ENCODE measurements at regions of chrX and their contacts with region 1.

Region 1: DNA sequence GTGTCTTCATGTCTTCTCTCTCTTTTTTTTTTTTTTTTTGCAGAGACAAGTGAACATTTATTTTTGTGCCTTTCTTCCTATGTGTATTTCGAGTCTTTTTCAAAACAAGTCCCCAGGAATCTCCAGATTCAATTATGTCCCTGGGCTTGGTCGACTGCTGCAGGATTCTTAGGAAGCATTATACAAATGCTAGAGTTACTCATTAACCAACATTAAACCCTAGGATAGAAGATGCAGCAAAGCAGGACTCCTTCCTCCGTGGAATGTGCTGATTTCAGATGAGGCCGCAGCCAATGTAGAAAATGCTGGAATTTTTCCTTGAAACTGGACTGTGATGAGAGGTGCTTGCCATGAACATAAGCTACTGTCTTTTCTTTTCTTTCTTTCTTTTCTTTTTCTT is 3.4 kb downstream of the ZNF81 start:
- DNase-seq: no peak
- ATAC-seq: no peak
- H3K4me3 ChIP-seq: no peak overlapping the region
- H3K4me3 Mint-ChIP-seq: no peak overlapping the region
- H3K27ac ChIP-seq: no peak overlapping the region
- H3K27ac Mint-ChIP-seq: no peak overlapping the region
- H3K4me1 ChIP-seq: peaks cover 7 to 11% of the 10 kb centered on the region in 2 experiments
- H3K4me1 Mint-ChIP-seq: peaks cover 19 to 31% (median 20%) of the 10 kb centered on the region in 3 donors
- H3K27me3 ChIP-seq: no peaks in the 10 kb centered on the region
- H3K27me3 Mint-ChIP-seq: no peaks in the 10 kb centered on the region

Region 2: GRCh38 chrX:47446431-47446830 is 393.7 kb before region 1 on chrX:
- CTCF ChIA-PET with region 1: no interaction called
- POLR2A ChIA-PET with region 1: interaction called in 1 of 2 experiments, 10 read pairs
- DNase-seq: no peak
- ATAC-seq: no peak
- H3K4me3 ChIP-seq: no peak overlapping the region
- H3K4me3 Mint-ChIP-seq: no peak overlapping the region
- H3K27ac ChIP-seq: no peak overlapping the region
- H3K27ac Mint-ChIP-seq: no peak overlapping the region
- H3K4me1 ChIP-seq: no peaks in the 10 kb centered on the region
- H3K4me1 Mint-ChIP-seq: no peaks in the 10 kb centered on the region
- H3K27me3 ChIP-seq: no peaks in the 10 kb centered on the region
- H3K27me3 Mint-ChIP-seq: peaks cover 0 to 3% of the 10 kb centered on the region in 2 donors

Region 3: DNA sequence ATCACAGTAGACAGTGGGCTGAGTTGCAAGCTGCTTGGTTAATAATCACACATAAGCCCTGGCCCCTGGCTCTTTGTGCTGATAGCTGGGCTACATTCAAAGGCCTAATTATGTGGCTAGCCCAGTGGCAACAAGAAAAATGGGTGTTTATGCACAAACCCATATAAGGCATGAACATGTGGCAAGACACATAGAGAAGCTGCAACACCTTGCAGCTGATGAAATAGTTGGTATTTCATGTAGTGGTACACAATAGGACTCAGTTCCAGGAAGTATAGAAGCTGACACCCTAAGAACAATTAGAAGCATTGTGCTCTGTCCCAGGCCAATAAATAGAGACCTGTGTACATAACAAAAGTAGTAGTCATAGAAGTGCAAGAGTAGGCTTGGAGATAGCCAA is 246.0 kb after region 1 on chrX:
- CTCF ChIA-PET with region 1: no interaction called
- POLR2A ChIA-PET with region 1: no interaction called
- DNase-seq: no peak
- ATAC-seq: no peak
- H3K4me3 ChIP-seq: no peak overlapping the region
- H3K4me3 Mint-ChIP-seq: no peak overlapping the region
- H3K27ac ChIP-seq: no peak overlapping the region
- H3K27ac Mint-ChIP-seq: no peak overlapping the region
- H3K4me1 ChIP-seq: no peaks in the 10 kb centered on the region
- H3K4me1 Mint-ChIP-seq: no peaks in the 10 kb centered on the region
- H3K27me3 ChIP-seq: no peaks in the 10 kb centered on the region
- H3K27me3 Mint-ChIP-seq: peaks cover 0 to 3% of the 10 kb centered on the region in 2 donors

Measured in T-cell (primary cell).